ENCODE measurements at regions of chr4 and their contacts with region 1.

Region 1: DNA sequence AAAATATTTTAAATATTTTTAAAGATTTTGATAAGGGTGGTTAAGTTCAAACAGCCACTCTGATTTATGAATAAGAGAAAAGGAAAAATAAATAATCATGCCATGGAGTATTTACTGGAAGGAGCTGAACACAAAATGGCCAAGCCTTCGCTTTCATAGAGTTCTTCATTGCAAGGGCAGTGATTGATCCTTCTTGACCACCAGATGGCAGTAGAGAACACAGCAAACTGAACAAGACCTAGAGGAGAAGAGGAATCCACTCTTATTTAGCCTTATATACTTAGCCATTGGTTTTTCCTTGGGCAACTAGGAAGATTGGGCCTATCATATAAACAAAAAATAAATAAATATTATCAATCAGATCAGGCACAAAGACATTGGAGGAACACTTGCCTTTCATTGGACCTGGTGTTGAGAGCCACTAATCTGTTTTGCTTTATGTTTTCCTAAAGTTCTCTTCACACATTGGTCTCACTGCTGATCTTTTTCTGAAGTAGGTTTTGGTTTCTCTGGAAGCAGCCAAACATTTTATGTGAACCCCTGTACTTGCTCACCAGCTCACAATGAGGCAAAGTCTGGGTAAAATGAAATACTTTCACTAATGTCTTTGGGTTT is 58.1 kb upstream of the PARM1 start:
- DNase-seq: peak; percentile 64
- ATAC-seq: peak; percentile 85
- H3K4me3 ChIP-seq: no peak overlapping the region
- H3K27ac ChIP-seq: no peak overlapping the region
- H3K4me1 ChIP-seq: no peaks in the 10 kb centered on the region
- H3K27me3 ChIP-seq: no peaks in the 10 kb centered on the region
- CTCF ChIP-seq: peak; percentile 81
- EP300 ChIP-seq: no peak
- POLR2A ChIP-seq: no peak
- RAD21 ChIP-seq: 0 out of 2 replicates have a peak, but pooled peaks have one; percentile 41

Region 2: GRCh38 chr4:74790652-74791443 is 84.0 kb before region 1 on chr4:
- CTCF ChIA-PET with region 1: no interaction called
- POLR2A ChIA-PET with region 1: no interaction called
- in situ Hi-C with region 1: no loop called
- intact Hi-C with region 1: no loop called
- DNase-seq: no peak
- ATAC-seq: no peak
- H3K4me3 ChIP-seq: no peak overlapping the region
- H3K27ac ChIP-seq: no peak overlapping the region
- H3K4me1 ChIP-seq: no peaks in the 10 kb centered on the region
- H3K27me3 ChIP-seq: peaks cover 0 to 21% of the 10 kb centered on the region in 2 experiments; a peak in 2 of 5 replicates
- CTCF ChIP-seq: no peak
- EP300 ChIP-seq: no peak
- POLR2A ChIP-seq: no peak
- RAD21 ChIP-seq: no peak

Region 3: DNA sequence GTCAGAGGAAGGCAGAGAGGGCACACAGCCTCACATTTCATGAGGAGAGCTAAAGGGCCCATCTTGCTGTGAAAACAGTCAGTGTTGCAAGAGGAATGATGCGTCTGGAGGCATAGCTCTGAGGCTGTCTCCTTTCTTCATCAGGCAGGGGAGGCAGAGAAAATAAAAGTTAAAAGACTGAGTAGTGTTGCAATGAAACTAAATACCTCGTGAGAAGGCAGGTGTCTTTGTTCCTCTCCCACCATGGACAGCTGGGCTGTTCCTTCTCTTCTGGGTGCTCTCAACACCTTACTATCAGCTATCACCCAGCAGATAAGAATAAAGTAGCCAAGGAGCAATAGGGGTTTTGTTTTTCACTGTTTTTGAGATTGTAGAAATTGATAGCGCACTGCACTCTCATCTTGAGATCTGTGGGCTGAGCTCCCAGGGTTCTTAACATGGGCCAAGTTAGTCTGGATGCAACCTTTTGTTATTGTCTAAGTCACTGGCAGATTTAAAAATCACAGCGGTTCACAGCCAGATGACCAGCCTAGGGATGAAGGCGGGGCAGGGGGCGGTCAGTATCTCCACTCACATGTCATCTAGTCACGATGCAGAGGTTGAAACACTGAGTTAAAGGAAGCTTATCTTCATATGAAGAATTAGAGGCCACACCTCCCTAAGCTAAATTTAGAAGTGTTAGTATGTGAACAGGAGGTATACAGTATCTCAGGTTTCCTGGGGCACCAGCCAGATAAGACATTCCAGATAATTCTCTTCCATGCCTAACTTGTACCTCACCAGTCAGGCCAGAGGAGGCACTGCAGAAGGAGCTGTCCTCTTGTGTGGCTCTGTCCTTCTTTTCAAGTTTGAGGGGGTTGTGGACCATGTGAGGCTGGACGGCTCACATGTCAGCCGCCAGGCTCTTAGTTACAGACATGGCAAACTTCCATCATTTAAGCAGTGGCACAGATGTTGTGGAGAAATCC is 94.9 kb after region 1 on chr4:
- CTCF ChIA-PET with region 1: no interaction called
- POLR2A ChIA-PET with region 1: no interaction called
- in situ Hi-C with region 1: no loop called
- intact Hi-C with region 1: no loop called
- DNase-seq: no peak
- ATAC-seq: peak; percentile 62
- H3K4me3 ChIP-seq: no peak overlapping the region
- H3K27ac ChIP-seq: no peak overlapping the region
- H3K4me1 ChIP-seq: no peaks in the 10 kb centered on the region
- H3K27me3 ChIP-seq: no peaks in the 10 kb centered on the region; a peak in 1 of 5 replicates
- CTCF ChIP-seq: no peak
- EP300 ChIP-seq: no peak
- POLR2A ChIP-seq: no peak
- RAD21 ChIP-seq: no peak

Region 4: GRCh38 chr4:75289914-75290582 is 415.2 kb after region 1 on chr4:
- CTCF ChIA-PET with region 1: interaction called, 9 read pairs
- POLR2A ChIA-PET with region 1: no interaction called
- in situ Hi-C with region 1: loop called (anchors 5 kb)
- intact Hi-C with region 1: loop called (anchors 1 kb)
- DNase-seq: peak; percentile 20
- ATAC-seq: peak; percentile 77
- H3K4me3 ChIP-seq: no peak overlapping the region
- H3K27ac ChIP-seq: no peak overlapping the region
- H3K4me1 ChIP-seq: no peaks in the 10 kb centered on the region
- H3K27me3 ChIP-seq: no peaks in the 10 kb centered on the region
- CTCF ChIP-seq: peak; percentile 47; the same call in 1 of the 2 replicates
- EP300 ChIP-seq: no peak
- POLR2A ChIP-seq: no peak
- RAD21 ChIP-seq: no peak

Region 5: GRCh38 chr4:75490155-75490554 is 615.3 kb after region 1 on chr4:
- CTCF ChIA-PET with region 1: interaction called, 3 read pairs
- POLR2A ChIA-PET with region 1: no interaction called
- in situ Hi-C with region 1: no loop called
- intact Hi-C with region 1: loop called (anchors 10 kb)
- DNase-seq: no peak
- ATAC-seq: peak; percentile 41; the same call in 1 of the 3 replicates
- H3K4me3 ChIP-seq: no peak overlapping the region
- H3K27ac ChIP-seq: no peak overlapping the region
- H3K4me1 ChIP-seq: peaks cover 5% of the 10 kb centered on the region
- H3K27me3 ChIP-seq: no peaks in the 10 kb centered on the region
- CTCF ChIP-seq: peak; percentile 32
- EP300 ChIP-seq: no peak
- POLR2A ChIP-seq: no peak
- RAD21 ChIP-seq: no peak